ENCODE measurements at regions of chr16 and their contacts with region 1.

Region 1: DNA sequence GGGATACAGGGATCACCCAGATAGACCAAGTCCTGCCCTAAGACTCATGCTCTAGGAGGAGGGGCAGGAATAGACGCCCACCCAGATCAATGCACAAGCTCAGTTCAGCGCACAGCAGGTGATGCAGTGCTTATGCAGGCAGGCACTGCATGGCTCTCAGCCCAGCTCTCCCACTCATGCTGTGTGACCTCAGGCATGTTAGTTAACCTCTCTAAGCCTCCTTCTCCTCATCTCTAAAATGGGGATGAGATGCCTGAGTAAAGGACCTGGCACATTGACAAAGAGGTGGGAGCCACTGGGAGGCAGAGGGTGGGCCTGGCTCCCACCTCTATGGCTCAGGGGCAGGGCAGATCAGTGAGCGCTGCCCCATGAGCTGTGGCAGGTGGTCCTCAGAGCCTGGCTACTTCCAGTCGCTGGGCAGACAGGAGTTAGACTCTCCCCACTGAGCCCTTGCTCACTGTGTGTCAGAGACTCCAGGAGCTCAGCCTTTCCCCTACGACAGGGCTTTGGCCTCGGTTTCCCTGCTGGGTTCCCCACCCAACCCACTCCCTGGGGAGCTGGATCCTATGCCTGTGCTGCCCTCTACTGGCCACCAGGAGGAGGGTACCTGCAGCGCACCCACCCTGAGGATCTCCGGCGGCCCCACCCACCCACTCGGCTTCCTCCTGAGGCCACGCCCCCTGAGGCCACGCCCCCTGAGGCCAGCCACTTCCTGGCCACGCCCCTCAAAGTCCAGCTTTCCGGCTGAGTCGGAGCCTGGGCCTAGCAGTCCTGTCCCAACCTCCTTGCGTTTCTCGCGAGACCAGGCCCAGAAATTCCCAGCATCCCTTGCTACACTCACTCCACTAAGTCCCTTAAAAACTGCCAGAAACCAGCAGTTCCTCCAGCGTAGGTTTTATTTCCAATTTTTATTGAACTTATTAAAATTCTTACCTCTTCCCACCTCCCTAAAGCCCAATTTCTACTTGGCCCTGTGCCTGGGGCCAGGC is 196.1 kb downstream of the GSG1L start:
- DNase-seq: peak in 1 of 2 donors; percentile 73
- ATAC-seq: peak; percentile 19
- H3K4me3 ChIP-seq: no peak overlapping the region
- H3K27ac ChIP-seq: no peak overlapping the region
- H3K4me1 ChIP-seq: no peaks in the 10 kb centered on the region
- H3K27me3 ChIP-seq: no peaks in the 10 kb centered on the region

Region 2: GRCh38 chr16:27639561-27640276 is 227.7 kb before region 1 on chr16:
- intact Hi-C with region 1: loop called in 1 of 2 experiments (anchors 10 kb)
- DNase-seq: no peak
- ATAC-seq: no peak
- H3K4me3 ChIP-seq: no peak overlapping the region
- H3K27ac ChIP-seq: no peak overlapping the region
- H3K4me1 ChIP-seq: no peaks in the 10 kb centered on the region
- H3K27me3 ChIP-seq: no peaks in the 10 kb centered on the region

Region 3: DNA sequence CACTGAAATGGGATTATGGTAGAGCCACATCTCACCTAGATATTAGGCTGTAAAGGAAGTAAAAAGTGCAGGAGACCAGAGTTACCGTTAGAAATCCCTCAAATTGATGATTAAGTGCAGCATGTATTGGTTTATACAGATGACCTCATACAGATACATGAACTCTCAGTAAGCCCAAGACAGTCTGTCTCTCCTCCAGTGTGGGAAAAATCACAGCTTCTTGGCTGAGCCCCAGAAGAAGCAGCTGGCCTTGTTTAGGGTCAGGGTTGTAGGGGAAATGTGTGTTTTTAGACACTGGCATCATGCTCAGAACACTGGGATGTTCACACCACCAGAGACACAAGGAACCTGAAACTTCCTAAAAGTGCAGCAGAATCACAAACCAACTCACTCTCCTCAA is 181.6 kb before region 1 on chr16:
- intact Hi-C with region 1: no loop called
- DNase-seq: no peak
- ATAC-seq: no peak
- H3K4me3 ChIP-seq: no peak overlapping the region
- H3K27ac ChIP-seq: peak overlapping the region in 1 of 2 donors; percentile 19
- H3K4me1 ChIP-seq: no peaks in the 10 kb centered on the region
- H3K27me3 ChIP-seq: no peaks in the 10 kb centered on the region

Region 4: DNA sequence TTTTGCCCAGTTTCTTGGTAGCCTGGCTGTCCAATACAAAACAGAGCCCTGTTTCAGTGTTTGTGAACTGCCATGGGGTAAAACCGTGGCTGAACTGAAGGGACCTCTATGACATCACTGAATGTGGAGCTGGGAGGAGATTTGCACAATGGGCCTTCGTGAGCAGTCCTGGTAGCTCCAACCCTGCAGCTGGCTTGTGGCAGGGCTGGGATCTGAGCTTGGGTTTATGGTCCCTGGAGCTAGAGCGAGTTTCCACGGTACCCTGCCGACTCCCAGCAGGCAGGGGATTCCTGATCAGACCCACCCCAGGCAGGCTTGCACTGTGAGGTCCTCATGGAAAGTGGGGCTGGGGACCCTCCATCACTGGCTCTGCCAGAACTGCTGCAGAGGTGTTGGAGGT is 50.9 kb before region 1 on chr16:
- intact Hi-C with region 1: loop called in 1 of 2 experiments (anchors 10 kb)
- DNase-seq: peak in 1 of 2 donors; percentile 53
- ATAC-seq: no peak
- H3K4me3 ChIP-seq: no peak overlapping the region
- H3K27ac ChIP-seq: no peak overlapping the region
- H3K4me1 ChIP-seq: no peaks in the 10 kb centered on the region
- H3K27me3 ChIP-seq: no peaks in the 10 kb centered on the region